ENCODE measurements at regions of chr5 and their contacts with region 1.

Region 1: GRCh38 chr5:175809531-175810121 is 61.8 kb upstream of the CPLX2 start:
- DNase-seq: peak; percentile 97
- ATAC-seq: peak; percentile 82
- H3K4me3 ChIP-seq: no peak overlapping the region
- H3K27ac ChIP-seq: peak overlapping the region; percentile 59
- H3K4me1 ChIP-seq: peaks cover 51% of the 10 kb centered on the region
- H3K27me3 ChIP-seq: no peaks in the 10 kb centered on the region
- CTCF ChIP-seq: no peak

Region 2: DNA sequence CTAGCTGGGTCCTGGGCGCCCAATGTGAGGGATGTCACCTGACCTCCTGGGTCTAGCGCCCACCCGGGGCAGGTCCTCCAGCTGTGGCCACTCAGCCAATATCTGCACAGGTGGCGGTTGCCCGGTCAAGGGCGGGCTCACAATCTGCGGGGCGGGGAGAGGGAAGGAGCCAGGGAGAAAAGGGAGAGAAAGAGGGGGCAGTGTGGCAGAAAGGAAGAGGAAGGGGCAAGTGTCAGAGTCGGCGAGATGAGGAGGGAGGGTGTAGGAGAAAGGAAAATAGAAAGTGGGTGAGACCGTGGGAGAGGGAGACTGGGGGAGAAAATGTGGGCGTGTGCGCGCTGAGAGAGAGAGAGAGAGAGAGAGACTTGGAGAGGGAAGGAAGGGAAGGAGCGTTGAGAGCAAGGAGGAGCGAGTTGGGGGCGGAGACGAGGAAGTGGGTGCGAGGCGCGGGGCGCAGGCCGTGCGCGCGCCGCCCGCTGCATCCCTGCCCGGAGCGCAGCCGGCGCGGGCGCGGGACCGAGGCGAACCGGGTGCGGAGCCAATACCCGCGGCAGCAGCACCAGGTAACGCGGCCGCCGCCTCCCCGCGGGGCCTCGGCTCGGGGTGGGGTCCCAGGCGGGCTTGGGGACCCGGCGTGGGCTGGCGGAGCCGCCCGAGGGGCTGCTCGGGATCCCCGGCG is 151.9 kb before region 1 on chr5 and contains the start of gene HRH2:
- CTCF ChIA-PET with region 1: no interaction called
- POLR2A ChIA-PET with region 1: no interaction called
- intact Hi-C with region 1: no loop called
- DNase-seq: no peak
- ATAC-seq: no peak
- H3K4me3 ChIP-seq: no peak within 1 kb of the TSS
- H3K27ac ChIP-seq: no peak within 1 kb of the TSS
- H3K4me1 ChIP-seq: no peaks in the 10 kb centered on the region
- H3K27me3 ChIP-seq: peaks cover 50% of the 10 kb centered on the region
- CTCF ChIP-seq: no peak
- total RNA-seq, gene HRH2: not detected in 2 replicates

Region 3: DNA sequence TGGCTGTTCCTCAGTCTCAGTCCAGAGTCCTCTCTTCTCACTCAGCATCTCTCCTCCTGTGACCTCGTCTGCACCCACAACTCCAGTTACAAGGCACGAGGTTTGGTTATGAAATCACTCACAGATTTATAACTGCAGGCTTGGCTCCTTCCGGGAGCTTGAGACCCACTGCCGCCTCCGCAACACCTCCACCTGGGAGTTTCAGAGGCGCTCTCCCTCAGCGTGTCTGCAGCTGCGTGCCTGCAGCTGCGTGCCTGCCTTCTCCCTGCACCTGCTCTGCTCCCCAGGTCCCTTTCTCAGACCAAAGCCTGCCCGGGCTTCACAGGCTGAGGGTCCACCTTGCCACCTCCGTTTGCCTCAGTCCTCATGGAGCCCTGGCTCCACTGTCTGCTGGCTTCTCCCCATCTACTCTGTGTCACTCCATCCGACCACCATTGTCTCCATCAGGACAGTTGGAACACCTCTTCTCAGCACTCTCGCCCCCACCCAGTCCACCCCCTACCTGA is 100.3 kb before region 1 on chr5:
- CTCF ChIA-PET with region 1: no interaction called
- POLR2A ChIA-PET with region 1: no interaction called
- intact Hi-C with region 1: no loop called
- DNase-seq: no peak
- ATAC-seq: no peak
- H3K4me3 ChIP-seq: no peak overlapping the region
- H3K27ac ChIP-seq: no peak overlapping the region
- H3K4me1 ChIP-seq: no peaks in the 10 kb centered on the region
- H3K27me3 ChIP-seq: peaks cover 66% of the 10 kb centered on the region
- CTCF ChIP-seq: no peak

Region 4: GRCh38 chr5:175821790-175822211 is 12.2 kb after region 1 on chr5:
- CTCF ChIA-PET with region 1: interaction called, 3 read pairs
- POLR2A ChIA-PET with region 1: no interaction called
- intact Hi-C with region 1: loop called (anchors 1 kb)
- DNase-seq: peak; percentile 90
- ATAC-seq: peak; percentile 87
- H3K4me3 ChIP-seq: peak overlapping the region; percentile 52; the same call in 1 of the 2 replicates
- H3K27ac ChIP-seq: peak overlapping the region; percentile 88
- H3K4me1 ChIP-seq: peaks cover 26% of the 10 kb centered on the region
- H3K27me3 ChIP-seq: no peaks in the 10 kb centered on the region
- CTCF ChIP-seq: no peak

Measured in PC-3 (cell line).